ENCODE measurements at regions of chr19 and their contacts with region 1.

Region 1: DNA sequence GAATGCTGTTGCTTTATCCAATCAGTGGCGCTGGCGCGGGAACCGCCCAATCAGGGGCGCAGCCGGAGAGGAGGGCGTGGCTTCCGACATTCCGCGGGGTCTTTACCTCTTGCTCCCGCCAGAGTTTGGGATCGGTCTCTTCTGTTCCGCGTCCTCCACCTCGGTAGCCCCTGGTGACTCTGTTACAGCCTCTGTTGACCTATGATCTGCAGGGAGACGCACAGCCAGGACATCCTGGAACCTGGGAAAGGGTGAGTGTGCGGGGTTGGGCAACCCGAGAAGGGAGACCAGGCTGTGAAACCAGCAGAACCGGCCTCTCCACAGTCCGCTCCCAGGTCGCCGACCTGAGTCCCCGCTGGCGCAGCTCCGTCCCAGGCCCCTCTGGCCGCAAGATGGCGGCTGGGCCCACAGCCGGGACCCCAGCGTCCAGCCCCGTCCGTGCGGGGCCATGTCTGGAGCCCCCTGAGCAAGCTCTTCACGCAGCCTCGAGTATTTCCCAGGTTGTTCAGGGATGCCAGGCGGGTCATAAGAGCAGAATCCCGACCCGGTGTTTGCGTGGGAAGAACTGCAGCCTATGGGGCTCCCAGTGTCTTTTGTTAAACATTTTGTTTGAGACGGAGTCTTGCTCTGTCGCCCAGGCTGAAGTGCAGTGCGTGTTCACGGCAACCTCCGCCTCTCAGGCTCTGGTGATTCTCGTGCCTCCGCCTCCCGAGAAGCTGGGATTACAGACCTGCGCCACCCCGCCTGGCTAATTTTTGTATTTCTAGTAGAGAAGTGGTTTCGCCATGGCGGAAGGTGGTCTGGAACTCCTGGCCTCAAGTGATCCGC is 4.4 kb upstream of the ZNF681 start:
- DNase-seq: peak; percentile 66 to 98 (median 84)

Region 2: GRCh38 chr19:23673132-23673531 is 90.0 kb before region 1 on chr19:
- intact Hi-C with region 1: no loop called
- DNase-seq: no peak

Region 3: GRCh38 chr19:23799321-23799720 is 36.2 kb after region 1 on chr19:
- intact Hi-C with region 1: no loop called
- DNase-seq: no peak

Region 4: GRCh38 chr19:23882493-23882892 is 119.4 kb after region 1 on chr19:
- intact Hi-C with region 1: no loop called
- DNase-seq: no peak

Region 5: DNA sequence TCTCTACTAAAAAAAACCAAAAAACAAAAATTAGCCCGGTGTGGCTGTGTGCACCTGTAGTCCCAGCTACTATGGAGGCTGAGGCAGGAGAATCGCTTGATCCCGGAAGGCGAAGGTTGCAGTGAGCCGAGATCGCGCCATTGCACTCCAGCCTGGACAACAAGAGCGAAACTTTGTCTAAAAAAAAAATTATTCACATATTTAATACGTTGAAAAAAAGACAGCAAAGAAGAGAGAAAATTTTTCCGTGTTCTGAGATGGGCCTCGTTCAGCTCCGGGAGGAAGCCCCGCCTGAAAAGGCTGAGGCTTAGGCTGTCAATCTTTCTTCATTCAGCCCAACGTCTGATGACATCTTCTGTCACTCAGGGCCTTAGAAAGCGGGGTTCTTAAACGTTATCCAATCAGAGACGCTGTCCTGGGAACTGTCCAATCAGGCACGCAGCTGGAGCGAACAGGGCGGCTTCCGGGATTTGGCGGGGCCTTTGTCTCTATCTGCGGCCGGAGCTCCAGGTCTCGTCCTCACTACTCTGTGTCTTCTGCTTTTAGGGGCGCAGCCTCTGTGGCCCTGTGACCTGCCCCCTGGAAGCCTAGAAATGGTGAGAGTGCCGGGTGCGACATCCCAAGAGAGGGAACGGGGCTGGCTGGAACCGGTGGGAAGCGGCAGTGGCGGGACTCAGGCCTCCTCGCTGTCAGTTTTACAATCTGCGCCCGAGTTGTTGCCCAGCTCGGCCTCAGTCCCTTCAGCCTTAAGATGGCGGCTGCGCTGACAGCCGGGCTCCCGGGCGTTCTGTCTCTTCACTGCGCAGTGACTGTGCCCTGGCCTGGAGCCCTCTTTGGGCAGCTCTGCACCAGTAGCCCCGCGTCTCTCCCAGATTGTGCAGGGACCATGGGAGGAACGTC is 151.6 kb after region 1 on chr19 and contains the start of gene ZNF726:
- intact Hi-C with region 1: loop called (anchors 10 kb)
- DNase-seq: peak; percentile 78 to 96 (median 90)

Region 6: GRCh38 chr19:23932878-23933277 is 169.8 kb after region 1 on chr19:
- intact Hi-C with region 1: no loop called
- DNase-seq: no peak